Dorsolateral prefrontal cortex (tissue), 120 donors: ENCODE measurements at regions of chr7 and their contacts with region 1.

Region 1: DNA sequence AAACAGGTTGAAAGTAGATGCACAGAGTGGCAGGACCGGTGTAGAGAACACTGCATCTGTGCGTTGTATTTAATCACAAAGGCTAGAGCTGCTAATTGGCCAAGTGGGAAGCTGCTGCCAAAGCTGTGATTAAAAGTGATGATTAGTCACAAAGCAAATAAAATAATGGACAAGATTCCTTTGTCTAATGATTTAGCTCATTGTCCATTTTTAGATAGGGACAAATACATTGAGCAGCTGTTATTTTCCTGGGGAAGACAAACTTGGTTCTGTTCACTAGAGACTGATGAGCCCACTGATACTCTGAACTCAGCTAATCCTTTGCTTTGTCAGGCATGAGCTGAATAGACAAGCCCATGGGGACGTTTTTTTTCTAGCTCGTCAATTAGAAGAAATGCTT is 19.7 kb downstream of the UBE3C start:
- DNase-seq: peak in 1 of 10 donors; percentile 24
- H3K4me3 ChIP-seq: peak overlapping the region in 3 of 59 donors; percentile 1 to 34 (median 15)
- H3K27ac ChIP-seq: peak overlapping the region in 54 of 59 donors; percentile 4 to 91 (median 67)
- H3K27me3 ChIP-seq: no peaks in the 10 kb centered on the region
- CTCF ChIP-seq: peak in 3 of 56 donors; percentile 7 to 15 (median 10)

Region 2: GRCh38 chr7:155660059-155660757 is 1498.2 kb before region 1 on chr7:
- intact Hi-C with region 1: no loop called
- DNase-seq: no peak
- H3K4me3 ChIP-seq: no peak overlapping the region
- H3K27ac ChIP-seq: no peak overlapping the region
- H3K27me3 ChIP-seq: no peaks in the 10 kb centered on the region
- CTCF ChIP-seq: no peak

Region 3: DNA sequence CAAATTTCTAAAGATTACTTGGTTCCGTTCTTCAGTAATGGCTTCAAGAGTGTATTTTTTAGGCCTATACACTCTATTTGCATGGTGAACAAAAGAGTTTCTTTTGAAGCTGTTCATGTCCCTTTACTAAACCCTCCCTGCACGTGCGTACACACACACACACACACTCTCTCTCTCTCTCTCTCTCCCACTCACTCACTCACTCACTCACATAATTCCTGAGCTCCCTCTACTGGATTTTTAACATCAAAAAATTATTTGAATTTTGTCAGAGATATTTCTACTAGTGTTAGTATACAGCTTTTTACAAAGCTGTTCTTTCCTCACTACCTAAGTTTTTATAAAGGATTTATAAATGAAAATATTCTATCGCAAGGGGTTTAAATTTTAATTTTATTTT is 66.2 kb after region 1 on chr7:
- intact Hi-C with region 1: loop called in 1 of 2 experiments (anchors 5 kb)
- DNase-seq: no peak
- H3K4me3 ChIP-seq: no peak overlapping the region
- H3K27ac ChIP-seq: no peak overlapping the region
- H3K27me3 ChIP-seq: no peaks in the 10 kb centered on the region
- CTCF ChIP-seq: peak in 52 of 56 donors; percentile 22 to 70 (median 44)

Region 4: GRCh38 chr7:157633465-157634185 is 475.2 kb after region 1 on chr7:
- intact Hi-C with region 1: no loop called
- DNase-seq: no peak
- H3K4me3 ChIP-seq: no peak overlapping the region
- H3K27ac ChIP-seq: no peak overlapping the region
- H3K27me3 ChIP-seq: peaks cover 0 to 20% (median 0%) of the 10 kb centered on the region in 45 donors
- CTCF ChIP-seq: no peak